ENCODE measurements at regions of chr3 and their contacts with region 1.

Region 1: DNA sequence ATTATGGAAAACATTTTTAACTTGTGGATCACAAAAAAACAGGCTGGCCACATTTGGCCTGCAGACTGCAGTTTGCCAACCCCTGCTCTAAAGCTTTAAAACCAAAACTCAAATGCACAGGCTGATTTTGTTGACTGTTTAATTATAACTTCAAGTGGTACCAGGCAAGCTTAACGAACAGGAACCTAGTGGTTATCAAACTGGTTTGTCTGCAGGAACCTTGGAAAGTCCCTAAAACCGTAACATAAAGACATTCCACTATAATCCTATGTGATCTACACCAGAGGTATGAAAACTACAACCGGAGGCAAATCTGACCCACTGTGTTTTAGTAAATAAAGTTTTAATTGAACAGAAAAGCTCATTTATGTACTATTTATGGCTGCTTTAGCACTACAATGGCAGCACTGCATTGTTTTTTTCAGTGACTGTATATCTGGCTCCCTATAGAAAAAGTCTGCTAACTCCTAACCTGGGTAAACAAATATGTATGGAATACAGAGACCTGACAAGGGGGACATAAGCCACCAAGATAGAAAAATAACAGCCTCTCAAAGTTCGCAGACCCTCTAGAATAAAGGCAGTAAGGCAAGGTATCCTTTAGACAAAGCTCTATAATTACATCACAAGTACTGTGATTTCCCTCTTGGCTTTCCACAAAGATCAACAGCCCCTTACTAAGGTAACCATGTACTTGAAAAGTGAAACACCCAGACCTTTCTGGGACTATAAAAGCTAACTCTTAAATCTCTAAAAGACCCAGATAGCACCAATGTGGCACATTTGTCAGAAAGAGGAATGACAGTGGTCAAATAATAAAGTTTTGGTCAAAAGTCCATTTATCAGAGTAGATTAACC is 52.1 kb downstream of the TBL1XR1 start:
- DNase-seq: peak; percentile 82 to 97 (median 96)
- H3K4me3 ChIP-seq: peak overlapping the region in 4 of 7 experiments; percentile 5 to 51 (median 28)
- H3K27ac ChIP-seq: peak overlapping the region; percentile 97 to 98
- H3K4me1 ChIP-seq: peaks cover 34 to 86% (median 59%) of the 10 kb centered on the region in 4 experiments
- H3K27me3 ChIP-seq: no peaks in the 10 kb centered on the region

Region 2: GRCh38 chr3:177109688-177110330 is 35.3 kb before region 1 on chr3:
- CTCF ChIA-PET with region 1: interaction called, 11 read pairs
- POLR2A ChIA-PET with region 1: no interaction called
- DNase-seq: peak in 2 of 3 donors; percentile 43 to 59
- H3K4me3 ChIP-seq: no peak overlapping the region
- H3K27ac ChIP-seq: no peak overlapping the region
- H3K4me1 ChIP-seq: peaks cover 4 to 25% (median 14%) of the 10 kb centered on the region in 4 experiments
- H3K27me3 ChIP-seq: no peaks in the 10 kb centered on the region

Region 3: DNA sequence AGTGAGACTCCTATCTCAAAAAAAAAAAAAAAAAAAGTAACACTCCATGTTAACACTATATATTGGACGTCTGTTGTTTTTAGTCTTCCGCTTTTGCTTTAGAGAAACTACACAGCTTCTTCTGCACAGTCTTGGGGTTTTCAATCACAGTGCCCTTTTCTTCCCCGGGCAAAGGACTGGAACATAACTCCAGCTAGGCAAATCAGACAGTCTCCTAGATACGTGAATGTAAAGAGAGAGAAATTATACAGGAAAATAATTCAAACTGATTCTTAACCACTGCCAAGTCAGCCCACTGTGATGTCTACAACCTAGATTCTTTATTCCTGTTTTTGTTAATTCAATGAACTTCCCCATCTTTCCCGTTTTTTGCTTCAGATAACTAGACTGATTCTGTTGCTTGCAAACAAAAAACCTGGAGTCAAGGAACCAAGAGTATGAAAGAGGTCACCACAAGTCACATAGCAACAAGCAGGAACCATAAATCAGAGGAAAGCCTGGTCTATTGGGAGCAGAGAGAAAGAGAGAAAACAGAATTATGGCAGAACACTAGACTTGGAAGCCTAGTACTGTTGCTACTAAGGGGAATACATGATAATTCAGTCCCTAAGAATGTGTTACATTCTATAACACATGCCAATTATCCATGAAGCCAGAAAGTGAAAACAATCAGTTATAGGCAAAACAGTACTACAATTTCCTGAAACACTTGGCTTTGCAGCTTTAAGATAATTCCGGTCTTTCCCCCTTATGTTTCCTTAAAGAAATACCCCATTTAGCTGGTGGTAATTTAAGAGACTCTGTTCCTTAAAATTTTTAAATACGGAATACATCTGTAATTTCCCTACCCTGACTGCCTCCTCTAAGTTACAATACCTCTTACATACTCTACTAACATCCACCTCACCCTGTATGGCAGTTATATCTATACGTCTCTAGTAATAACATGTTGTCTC is 11.0 kb before region 1 on chr3:
- CTCF ChIA-PET with region 1: interaction called, 5 read pairs
- POLR2A ChIA-PET with region 1: interaction called, 13 read pairs
- DNase-seq: peak in 2 of 3 donors; percentile 71 to 80
- H3K4me3 ChIP-seq: peak overlapping the region in 4 of 7 experiments; percentile 19 to 48 (median 32)
- H3K27ac ChIP-seq: peak overlapping the region; percentile 28 to 52
- H3K4me1 ChIP-seq: peaks cover 13 to 30% (median 19%) of the 10 kb centered on the region in 4 experiments
- H3K27me3 ChIP-seq: no peaks in the 10 kb centered on the region

Region 4: GRCh38 chr3:177157492-177157891 is 12.3 kb after region 1 on chr3:
- CTCF ChIA-PET with region 1: interaction called, 33 read pairs
- POLR2A ChIA-PET with region 1: interaction called, 4 read pairs
- DNase-seq: no peak
- H3K4me3 ChIP-seq: no peak overlapping the region
- H3K27ac ChIP-seq: no peak overlapping the region
- H3K4me1 ChIP-seq: no peaks in the 10 kb centered on the region
- H3K27me3 ChIP-seq: no peaks in the 10 kb centered on the region

Region 5: DNA sequence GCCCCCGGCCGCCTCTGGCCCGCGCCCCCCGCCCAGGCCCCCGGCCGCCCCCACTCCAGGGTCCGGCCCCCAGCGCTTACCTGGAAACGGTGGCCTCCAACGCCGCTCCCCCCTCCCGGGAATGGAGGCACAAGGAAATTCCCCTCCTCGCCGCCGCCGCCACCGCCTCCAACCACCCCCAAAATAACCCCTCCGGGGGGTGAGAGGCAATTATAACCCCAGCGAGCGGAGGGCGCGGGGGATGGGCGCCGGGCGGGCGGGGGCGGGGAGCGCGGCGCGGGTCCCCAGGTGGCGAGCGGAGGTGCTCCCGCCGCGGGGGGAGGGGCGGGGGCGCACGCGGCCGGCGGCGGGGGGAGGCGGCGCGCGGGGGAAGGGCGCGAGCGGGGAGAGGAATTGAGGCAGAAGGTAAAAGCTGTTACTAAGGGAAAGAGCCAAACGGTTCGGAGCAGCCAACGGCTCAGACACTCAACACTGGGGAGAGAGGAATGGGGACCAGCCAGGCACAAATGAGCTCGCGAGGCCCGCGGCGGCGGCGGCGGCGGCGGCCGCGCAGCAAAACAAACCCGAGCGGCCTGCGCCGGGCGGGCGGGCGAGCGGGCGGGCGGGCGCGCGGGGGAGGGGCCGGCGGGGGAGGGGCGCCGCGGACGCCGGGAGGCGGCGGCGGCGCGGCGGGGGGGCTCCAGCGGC is 52.0 kb after region 1 on chr3 and contains the start of gene TBL1XR1:
- CTCF ChIA-PET with region 1: interaction called, 8 read pairs
- POLR2A ChIA-PET with region 1: interaction called, 26 read pairs
- DNase-seq: peak; percentile 92 to 97 (median 97)
- H3K4me3 ChIP-seq: peak within 1 kb of the TSS; percentile 66 to 97 (median 93)
- H3K27ac ChIP-seq: peak within 1 kb of the TSS; percentile 93 to 95
- H3K4me1 ChIP-seq: peaks cover 24 to 40% (median 34%) of the 10 kb centered on the region in 4 experiments
- H3K27me3 ChIP-seq: no peaks in the 10 kb centered on the region